Activated naive CD8-positive, alpha-beta T cell treated with anti-CD3 and anti-CD28 coated beads, Interleukin-2, amount 10 ng/mL, durations not matched to agents 7 days and 5 days (primary cell): ENCODE measurements at regions of chr1 and their contacts with region 1.

Region 1: GRCh38 chr1:26864610-26865527 is 1.9 kb downstream of the SFN start:
- DNase-seq: peak; percentile 97
- ATAC-seq: peak; percentile 93
- H3K4me3 Mint-ChIP-seq: peak overlapping the region; percentile 96
- H3K27ac Mint-ChIP-seq: peak overlapping the region; percentile 95
- H3K4me1 Mint-ChIP-seq: peaks cover 14% of the 10 kb centered on the region
- H3K27me3 Mint-ChIP-seq: no peaks in the 10 kb centered on the region

Region 2: DNA sequence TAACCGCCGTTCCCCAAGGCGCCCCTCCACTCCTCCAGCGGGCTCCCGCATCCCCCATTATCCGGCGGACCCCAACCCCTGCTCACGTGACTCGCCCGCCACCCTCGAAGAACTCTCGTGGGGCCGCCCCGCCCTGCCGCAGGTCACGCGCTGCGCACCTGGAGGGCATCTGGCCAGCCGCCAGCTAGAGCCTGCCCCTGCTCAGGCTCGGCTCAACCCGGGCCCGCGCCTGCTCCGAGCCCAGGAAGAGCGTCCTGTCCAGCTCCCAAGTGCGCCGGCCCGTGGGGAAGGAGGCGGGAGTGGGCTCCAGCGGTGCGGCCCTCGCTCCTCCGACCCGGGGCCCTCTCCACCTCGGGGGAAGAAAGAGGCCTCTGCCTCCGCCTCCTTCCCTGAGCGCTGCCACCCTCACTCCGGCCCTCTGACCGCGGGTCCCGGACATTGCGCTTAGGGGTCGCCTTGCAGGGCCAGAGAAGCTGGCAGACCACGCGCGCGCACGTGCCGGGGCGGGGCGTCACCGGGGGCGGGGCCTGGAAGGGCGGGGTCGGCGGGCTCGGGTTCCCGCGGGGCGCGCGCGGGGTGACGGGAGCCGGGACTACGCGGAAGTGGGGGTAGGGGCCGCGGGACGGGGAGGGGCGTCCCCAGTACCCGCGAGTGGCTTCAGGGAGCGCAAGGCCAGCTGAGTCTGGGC is 364.2 kb before region 1 on chr1:
- POLR2A ChIA-PET with region 1: interaction called, 13 read pairs
- DNase-seq: peak; percentile 97
- ATAC-seq: peak; percentile 68
- H3K4me3 Mint-ChIP-seq: peak overlapping the region; percentile 89
- H3K27ac Mint-ChIP-seq: peak overlapping the region; percentile 95
- H3K4me1 Mint-ChIP-seq: peaks cover 19% of the 10 kb centered on the region
- H3K27me3 Mint-ChIP-seq: no peaks in the 10 kb centered on the region

Region 3: GRCh38 chr1:26787706-26788514 is 77.0 kb before region 1 on chr1 and contains the start of gene PIGV:
- POLR2A ChIA-PET with region 1: interaction called, 34 read pairs
- DNase-seq: peak; percentile 96
- ATAC-seq: peak; percentile 59
- H3K4me3 Mint-ChIP-seq: peak within 1 kb of the TSS; percentile 99
- H3K27ac Mint-ChIP-seq: peak within 1 kb of the TSS; percentile 100
- H3K4me1 Mint-ChIP-seq: peaks cover 68% of the 10 kb centered on the region
- H3K27me3 Mint-ChIP-seq: no peaks in the 10 kb centered on the region
- total RNA-seq, gene PIGV: 21.5 TPM

Region 4: DNA sequence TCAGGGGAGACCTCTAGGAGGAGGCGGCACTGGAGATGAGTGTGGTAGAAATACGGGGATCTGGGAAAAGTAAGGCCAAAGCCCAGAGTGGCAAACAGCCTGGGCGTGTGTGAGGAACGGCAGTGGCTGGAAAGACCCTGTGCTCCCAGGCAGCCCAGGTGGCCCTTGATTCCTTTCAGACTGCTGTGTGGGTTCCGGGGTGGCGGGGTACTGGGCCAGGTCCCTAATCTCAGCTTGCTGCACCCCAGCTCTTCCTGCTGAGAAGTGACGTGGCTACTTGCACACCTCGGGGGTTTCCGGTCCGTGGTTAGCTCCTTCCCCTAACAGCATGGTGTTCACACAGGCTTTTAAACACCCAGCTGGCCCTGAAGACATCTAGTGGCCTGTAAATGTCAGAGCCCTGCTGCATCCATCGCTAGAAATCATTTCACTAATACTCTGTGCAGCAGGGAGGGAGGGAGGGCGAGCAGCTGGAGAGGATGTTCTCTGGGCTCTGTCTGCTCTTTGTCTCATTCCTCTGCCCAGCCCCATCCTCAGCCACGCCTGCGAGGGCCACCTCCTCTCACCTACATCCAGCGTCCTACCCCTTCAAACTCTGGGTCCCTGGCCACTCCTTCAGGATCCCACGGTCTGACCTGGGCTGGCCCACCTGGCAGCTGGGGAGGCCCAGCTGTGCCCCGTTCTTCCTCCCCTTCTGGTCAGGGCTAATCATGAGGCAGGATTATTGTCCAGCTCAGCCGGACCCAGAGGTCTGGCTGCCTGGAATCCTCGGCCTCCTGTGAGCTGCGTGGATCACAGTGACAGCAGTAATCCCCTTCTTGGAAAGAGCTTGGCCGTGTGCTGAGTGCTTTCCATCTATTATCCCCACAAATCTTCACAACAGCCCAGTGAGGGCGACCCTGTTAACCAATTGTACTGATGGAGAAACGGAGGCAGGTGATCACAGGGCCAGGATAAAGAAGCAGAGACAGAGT is 31.1 kb before region 1 on chr1:
- POLR2A ChIA-PET with region 1: interaction called, 34 read pairs
- DNase-seq: peak; percentile 83
- ATAC-seq: peak; percentile 95
- H3K4me3 Mint-ChIP-seq: peak overlapping the region; percentile 80
- H3K27ac Mint-ChIP-seq: peak overlapping the region; percentile 98
- H3K4me1 Mint-ChIP-seq: peaks cover 53% of the 10 kb centered on the region
- H3K27me3 Mint-ChIP-seq: no peaks in the 10 kb centered on the region

Region 5: DNA sequence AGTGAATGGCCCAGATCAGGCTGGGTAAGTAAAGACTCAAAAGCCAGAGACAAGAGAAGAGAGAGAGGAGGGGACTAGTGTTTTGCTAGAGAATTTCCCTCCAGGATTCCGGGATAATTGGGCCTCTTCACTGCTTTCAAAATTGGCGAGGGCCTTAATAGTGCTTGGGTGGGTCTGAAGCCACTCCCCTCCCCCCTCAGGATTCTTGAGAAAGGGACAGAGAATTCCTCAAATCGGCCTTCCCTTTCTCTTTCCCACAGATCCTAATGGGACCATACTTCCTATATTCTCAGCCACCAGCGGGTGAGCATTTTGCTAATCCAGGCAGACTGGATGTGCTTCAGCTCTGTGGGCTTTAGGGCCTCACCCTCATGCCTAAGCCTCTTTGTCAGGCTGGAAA is 10.0 kb after region 1 on chr1:
- POLR2A ChIA-PET with region 1: interaction called, 12 read pairs
- DNase-seq: no peak
- ATAC-seq: no peak
- H3K4me3 Mint-ChIP-seq: no peak overlapping the region
- H3K27ac Mint-ChIP-seq: peak overlapping the region; percentile 42
- H3K4me1 Mint-ChIP-seq: no peaks in the 10 kb centered on the region
- H3K27me3 Mint-ChIP-seq: no peaks in the 10 kb centered on the region

Region 6: DNA sequence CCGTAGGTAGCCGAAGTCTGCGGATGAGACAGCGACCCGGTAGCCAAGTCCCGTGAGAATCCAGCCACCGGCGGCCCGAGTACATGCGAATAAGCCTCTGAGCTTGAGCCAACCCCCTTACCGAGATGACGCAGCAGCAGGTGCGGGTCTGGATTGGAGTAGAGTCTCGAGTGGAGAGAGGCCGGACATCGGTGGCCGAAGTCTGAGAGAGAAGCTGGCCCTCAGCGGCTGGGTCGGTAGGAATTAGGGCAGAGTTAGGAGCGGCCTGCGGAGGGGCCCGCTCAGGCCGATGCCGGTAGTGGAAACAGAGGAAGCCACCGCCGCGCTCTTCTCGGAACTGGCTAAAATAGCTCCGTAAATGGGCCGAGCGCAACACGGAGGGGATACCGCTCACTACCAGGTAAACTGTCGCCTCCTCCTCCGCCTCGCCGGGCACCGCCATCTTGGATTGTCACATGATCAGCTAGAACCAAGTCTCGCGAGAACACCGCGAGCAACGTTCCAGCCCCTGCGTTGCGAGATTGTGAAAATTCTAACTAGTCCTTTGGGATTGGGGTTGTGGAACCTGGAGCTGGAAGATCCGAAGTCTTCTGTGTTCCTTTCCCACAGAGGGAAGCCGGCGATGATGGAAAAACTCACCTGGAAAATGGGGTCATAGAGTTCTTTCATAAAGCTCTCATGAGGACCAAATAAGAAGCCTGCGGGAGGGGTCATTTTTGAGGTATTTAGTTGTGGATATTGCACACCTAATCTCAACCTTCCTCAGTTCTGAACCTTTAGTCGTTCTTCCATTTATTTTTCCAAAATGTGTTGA is 35.3 kb after region 1 on chr1 and contains the start of gene GPATCH3:
- POLR2A ChIA-PET with region 1: interaction called, 16 read pairs
- DNase-seq: peak; percentile 85
- ATAC-seq: peak; percentile 87
- H3K4me3 Mint-ChIP-seq: peak within 1 kb of the TSS; percentile 98
- H3K27ac Mint-ChIP-seq: peak within 1 kb of the TSS; percentile 98
- H3K4me1 Mint-ChIP-seq: peaks cover 23% of the 10 kb centered on the region
- H3K27me3 Mint-ChIP-seq: no peaks in the 10 kb centered on the region
- total RNA-seq, gene GPATCH3: 17.3 to 19.6 TPM

Region 7: GRCh38 chr1:26949926-26950319 is 85.1 kb after region 1 on chr1:
- POLR2A ChIA-PET with region 1: no interaction called
- DNase-seq: no peak
- ATAC-seq: no peak
- H3K4me3 Mint-ChIP-seq: no peak overlapping the region
- H3K27ac Mint-ChIP-seq: no peak overlapping the region
- H3K4me1 Mint-ChIP-seq: peaks cover 2% of the 10 kb centered on the region
- H3K27me3 Mint-ChIP-seq: no peaks in the 10 kb centered on the region